ENCODE measurements at regions of chr3 and their contacts with region 1.

Region 1: GRCh38 chr3:64088418-64089117 is 65.3 kb upstream of the PSMD6 start:
- DNase-seq: no peak
- ATAC-seq: no peak
- H3K4me3 ChIP-seq: no peak overlapping the region
- H3K27ac ChIP-seq: no peak overlapping the region
- H3K4me1 ChIP-seq: peaks cover 0 to 12% (median 3%) of the 10 kb centered on the region in 9 donors
- H3K27me3 ChIP-seq: no peaks in the 10 kb centered on the region
- CTCF ChIP-seq: no peak

Region 2: DNA sequence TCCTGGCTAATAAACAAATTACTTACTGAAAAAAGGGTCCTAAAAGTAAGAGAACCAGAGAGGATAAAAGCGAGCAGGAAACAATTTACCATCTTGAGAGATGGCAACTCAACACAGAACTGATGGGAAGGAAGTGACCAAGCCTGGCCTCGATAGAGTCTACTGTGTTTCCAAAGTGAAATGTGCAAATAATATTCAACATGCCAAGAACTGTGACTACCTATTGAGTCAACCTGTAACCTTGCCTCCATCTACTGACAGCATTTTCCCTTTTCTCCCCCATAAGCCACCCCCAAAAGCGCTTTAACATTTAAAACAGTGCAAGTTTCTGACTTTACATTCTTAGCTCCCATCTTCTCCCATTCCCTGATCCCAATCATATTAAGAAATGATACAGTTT is 10.1 kb after region 1 on chr3:
- intact Hi-C with region 1: loop called in 1 of 10 experiments (anchors 1 kb)
- DNase-seq: no peak
- ATAC-seq: no peak
- H3K4me3 ChIP-seq: no peak overlapping the region
- H3K27ac ChIP-seq: no peak overlapping the region
- H3K4me1 ChIP-seq: peaks cover 0 to 9% (median 0%) of the 10 kb centered on the region in 9 donors
- H3K27me3 ChIP-seq: no peaks in the 10 kb centered on the region
- CTCF ChIP-seq: no peak

Measured in heart right ventricle (tissue), 16 donors.